A549 (cell line): ENCODE measurements at regions of chr19 and their contacts with region 1.

Region 1: DNA sequence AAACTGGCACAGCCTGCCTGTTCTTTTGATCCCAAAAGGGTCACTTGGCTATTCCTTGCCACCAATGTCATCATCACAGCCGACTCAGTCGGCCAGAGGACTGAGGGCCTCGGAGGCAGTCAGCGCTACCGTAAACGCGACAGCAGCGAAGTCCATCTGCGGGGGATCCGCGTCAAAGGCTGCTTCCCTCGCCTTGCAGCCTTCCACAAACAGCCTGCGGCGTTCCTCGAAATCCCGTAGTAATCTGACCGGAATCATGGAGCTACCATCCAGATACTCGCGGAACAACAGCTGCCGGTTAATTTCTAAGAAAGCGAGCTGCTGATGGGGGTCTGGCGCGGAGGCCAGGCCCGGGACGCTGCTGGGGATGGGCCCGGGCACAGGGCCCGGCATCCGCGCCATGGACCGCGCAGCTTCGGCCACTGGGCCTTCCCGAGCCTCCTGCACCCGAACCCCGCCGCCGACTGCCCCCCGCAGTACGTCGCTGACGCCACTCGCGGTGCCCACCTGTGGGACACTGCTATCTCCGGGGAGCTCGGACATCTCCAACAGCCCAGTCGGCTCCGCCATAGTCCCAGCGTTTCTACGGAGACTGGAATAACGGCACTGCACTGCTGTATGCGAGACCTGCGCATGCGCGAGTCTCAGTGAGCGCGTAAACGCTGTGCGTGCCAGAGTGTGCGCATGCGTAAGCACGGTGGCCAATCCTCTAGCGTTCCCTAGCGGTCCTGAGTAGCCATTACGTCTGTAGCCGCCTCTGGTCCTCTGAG is at the start of gene EID2B:
- DNase-seq: peak; percentile 99 to 100
- ATAC-seq: peak; percentile 95 to 96
- H3K4me3 ChIP-seq: peak within 1 kb of the TSS; percentile 68
- H3K27ac ChIP-seq: peak within 1 kb of the TSS; percentile 83 to 88
- H3K4me1 ChIP-seq: peaks cover 14% of the 10 kb centered on the region
- CTCF ChIP-seq: peak; percentile 100
- EP300 ChIP-seq: no peak
- POLR2A ChIP-seq: peak; percentile 96
- RAD21 ChIP-seq: peak; percentile 100
- polyA plus RNA-seq, gene EID2B: 9.4 and 10.9 TPM in 2 replicates

Region 2: DNA sequence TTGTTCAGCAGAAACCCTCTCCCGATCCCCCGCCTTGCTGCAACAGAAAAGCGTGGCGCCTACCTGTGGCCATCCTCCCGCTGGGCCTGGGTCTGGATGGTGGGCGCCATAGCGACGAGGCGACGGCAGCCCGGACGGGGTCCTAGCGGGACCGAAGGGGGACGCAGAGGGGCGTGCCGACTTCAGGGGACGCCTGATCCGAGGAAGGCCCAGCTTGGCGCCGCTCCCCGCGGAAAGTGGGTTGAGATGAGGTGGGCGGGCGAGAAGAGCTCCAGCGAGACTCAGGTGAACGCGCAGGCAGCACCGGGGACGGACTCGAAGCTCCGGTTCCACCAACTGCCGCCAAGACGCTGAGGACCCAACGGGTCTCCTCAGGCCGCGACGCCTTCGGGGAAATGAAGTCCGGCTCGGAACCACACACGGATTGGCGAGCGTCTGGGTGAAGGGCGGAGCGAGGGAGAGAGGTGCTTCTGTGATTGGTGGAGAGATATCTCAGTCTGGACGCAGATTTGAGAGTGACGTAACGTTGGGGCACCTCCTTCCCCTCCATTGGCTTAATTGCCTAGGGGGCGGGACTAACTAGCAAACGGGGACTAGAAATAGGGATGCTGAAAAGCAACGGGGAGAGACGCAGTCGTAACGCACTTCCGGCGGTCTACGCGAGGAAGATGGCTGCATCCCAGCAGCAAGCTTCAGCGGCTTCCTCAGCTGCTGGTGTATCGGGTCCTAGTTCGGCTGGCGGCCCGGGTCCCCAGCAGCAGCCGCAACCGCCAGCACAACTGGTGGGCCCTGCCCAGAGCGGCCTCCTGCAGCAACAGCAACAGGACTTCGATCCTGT is 141.4 kb before region 1 on chr19 and contains the starts of genes MED29 and PAF1:
- CTCF ChIA-PET with region 1: interaction called, 35 read pairs
- POLR2A ChIA-PET with region 1: no interaction called
- DNase-seq: peak; percentile 100
- ATAC-seq: peak; percentile 91 to 97
- H3K4me3 ChIP-seq: peak within 1 kb of the TSS; percentile 68
- H3K27ac ChIP-seq: peak within 1 kb of the TSS; percentile 89 to 90
- H3K4me1 ChIP-seq: peaks cover 15% of the 10 kb centered on the region; the same call in 2 of the 3 replicates
- CTCF ChIP-seq: no peak
- EP300 ChIP-seq: no peak
- POLR2A ChIP-seq: peak; percentile 99
- RAD21 ChIP-seq: no peak; a peak in 1 of 5 replicates
- polyA plus RNA-seq, gene MED29: 55.7 and 57.5 TPM in 2 replicates
- polyA plus RNA-seq, gene PAF1: 73.0 and 103 TPM in 2 replicates

Region 3: DNA sequence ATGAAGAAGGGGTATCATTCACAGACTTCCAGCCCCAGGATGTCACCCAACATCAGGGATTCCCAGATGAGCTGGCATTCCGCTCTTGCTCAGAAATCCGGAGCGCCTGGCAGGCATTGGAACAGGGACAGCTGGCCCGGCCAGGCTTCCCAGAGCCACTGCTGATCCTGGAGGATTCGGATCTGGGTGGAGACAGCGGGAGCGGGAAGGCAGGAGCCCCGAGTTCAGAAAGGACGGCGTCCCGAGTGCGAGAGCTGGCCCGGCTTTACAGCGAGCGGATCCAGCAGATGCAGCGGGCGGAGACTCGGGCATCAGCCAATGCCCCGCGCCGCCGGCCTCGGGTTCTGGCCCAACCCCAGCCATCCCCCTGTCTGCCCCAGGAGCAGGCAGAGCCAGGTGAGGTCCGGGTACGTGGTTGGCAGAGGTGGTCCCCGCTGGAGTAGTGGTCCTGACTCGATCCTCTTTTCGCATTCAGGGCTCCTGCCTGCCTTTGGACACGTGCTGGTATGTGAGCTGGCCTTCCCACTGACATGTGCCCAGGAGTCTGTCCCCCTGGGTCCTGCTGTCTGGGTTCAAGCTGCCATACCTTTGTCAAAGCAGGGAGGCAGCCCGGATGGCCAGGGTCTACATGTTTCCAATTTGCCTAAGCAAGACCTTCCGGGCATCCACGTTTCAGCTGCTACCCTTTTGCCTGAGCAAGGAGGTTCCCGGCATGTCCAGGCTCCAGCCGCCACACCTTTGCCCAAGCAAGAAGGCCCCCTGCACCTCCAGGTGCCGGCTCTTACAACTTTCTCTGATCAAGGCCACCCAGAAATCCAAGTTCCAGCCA is 108.9 kb before region 1 on chr19:
- CTCF ChIA-PET with region 1: interaction called, 50 read pairs
- POLR2A ChIA-PET with region 1: no interaction called
- DNase-seq: no peak
- ATAC-seq: 0 out of 6 replicates have a peak, but pooled peaks of 1 of the 2 experiments have one; percentile 1
- H3K4me3 ChIP-seq: no peak overlapping the region
- H3K27ac ChIP-seq: no peak overlapping the region
- H3K4me1 ChIP-seq: peaks cover 12% of the 10 kb centered on the region
- CTCF ChIP-seq: no peak
- EP300 ChIP-seq: no peak
- POLR2A ChIP-seq: no peak
- RAD21 ChIP-seq: no peak

Region 4: DNA sequence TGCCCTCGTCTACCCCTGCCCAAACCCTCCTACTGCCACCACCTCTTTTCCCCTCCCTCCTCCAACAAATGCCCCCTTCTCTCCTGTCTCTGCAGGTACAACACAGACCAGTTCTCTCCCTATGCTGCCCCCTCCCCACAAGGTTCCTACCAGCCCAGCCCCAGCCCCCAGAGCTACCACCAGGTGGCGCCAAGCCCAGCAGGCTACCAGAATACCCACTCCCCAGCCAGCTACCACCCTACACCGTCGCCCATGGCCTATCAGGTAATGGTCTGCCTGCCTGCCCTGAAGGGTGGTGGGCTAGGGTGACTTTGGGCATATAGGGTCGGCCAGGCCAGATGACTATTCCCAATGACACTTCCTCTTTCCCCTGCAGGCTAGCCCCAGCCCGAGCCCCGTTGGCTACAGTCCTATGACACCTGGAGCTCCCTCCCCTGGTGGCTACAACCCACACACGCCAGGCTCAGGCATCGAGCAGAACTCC is 58.2 kb before region 1 on chr19:
- CTCF ChIA-PET with region 1: interaction called, 299 read pairs
- POLR2A ChIA-PET with region 1: interaction called, 3 read pairs
- DNase-seq: peak; percentile 64 to 89
- ATAC-seq: peak; percentile 58 to 87; a peak in 5 of 6 replicates
- H3K4me3 ChIP-seq: no peak overlapping the region
- H3K27ac ChIP-seq: no peak overlapping the region
- H3K4me1 ChIP-seq: peaks cover 13% of the 10 kb centered on the region
- CTCF ChIP-seq: peak; percentile 97
- EP300 ChIP-seq: no peak
- POLR2A ChIP-seq: no peak
- RAD21 ChIP-seq: peak; percentile 61 to 69; a peak in 4 of 5 replicates

Region 5: GRCh38 chr19:39502640-39503417 is 29.6 kb before region 1 on chr19:
- CTCF ChIA-PET with region 1: interaction called, 259 read pairs
- POLR2A ChIA-PET with region 1: no interaction called
- DNase-seq: peak; percentile 94 to 97
- ATAC-seq: peak in 1 of 2 experiments; percentile 39; a peak in 4 of 6 replicates
- H3K4me3 ChIP-seq: peak overlapping the region; percentile 16; the same call in 1 of the 3 replicates
- H3K27ac ChIP-seq: peak overlapping the region; percentile 6 to 57; a peak in 2 of 6 replicates
- H3K4me1 ChIP-seq: peaks cover 25% of the 10 kb centered on the region
- CTCF ChIP-seq: peak; percentile 99
- EP300 ChIP-seq: no peak
- POLR2A ChIP-seq: no peak
- RAD21 ChIP-seq: peak in 1 of 2 experiments; percentile 58; a peak in 4 of 5 replicates

Region 6: DNA sequence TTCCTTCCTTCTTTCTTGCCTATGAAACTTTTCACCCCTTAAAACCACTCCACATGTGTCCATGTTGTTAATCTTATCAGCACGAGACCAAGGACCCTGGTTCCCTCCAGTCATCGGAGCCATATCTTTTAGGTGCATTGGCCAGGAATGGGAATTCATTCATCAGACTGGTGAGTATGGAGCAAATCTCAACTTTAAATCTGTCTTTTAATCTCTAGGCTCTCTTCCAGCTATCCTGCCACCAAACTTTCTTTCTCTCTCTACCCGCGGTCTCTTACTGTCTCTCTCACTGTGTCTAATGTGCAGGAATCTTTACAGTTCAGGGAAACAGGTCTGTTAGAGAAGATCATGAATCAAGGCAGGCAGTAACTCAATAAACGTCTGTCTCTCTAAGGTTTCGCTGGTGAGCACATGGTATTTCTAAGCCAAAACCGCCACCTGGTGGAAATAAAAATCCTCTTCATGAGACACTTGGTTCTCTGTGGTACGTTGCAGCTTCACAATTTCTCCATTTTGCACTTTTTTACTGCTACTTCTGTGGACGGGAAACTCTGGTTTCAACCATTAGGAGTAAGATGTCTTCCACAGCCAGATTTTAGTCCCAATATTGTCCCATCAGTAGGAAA is 139.4 kb after region 1 on chr19:
- CTCF ChIA-PET with region 1: interaction called, 30 read pairs
- POLR2A ChIA-PET with region 1: interaction called, 3 read pairs
- DNase-seq: peak; percentile 69 to 83
- ATAC-seq: peak; percentile 95 to 98
- H3K4me3 ChIP-seq: no peak overlapping the region
- H3K27ac ChIP-seq: no peak overlapping the region
- H3K4me1 ChIP-seq: peaks cover 5% of the 10 kb centered on the region; the same call in 1 of the 3 replicates
- CTCF ChIP-seq: peak; percentile 99
- EP300 ChIP-seq: no peak
- POLR2A ChIP-seq: no peak
- RAD21 ChIP-seq: peak; percentile 99 to 100

Region 7: GRCh38 chr19:39765091-39766076 is 233.0 kb after region 1 on chr19:
- CTCF ChIA-PET with region 1: no interaction called
- POLR2A ChIA-PET with region 1: no interaction called
- DNase-seq: peak; percentile 41 to 82
- ATAC-seq: peak; percentile 55 to 77; a peak in 3 of 6 replicates
- H3K4me3 ChIP-seq: no peak overlapping the region
- H3K27ac ChIP-seq: no peak overlapping the region
- H3K4me1 ChIP-seq: no peaks in the 10 kb centered on the region
- CTCF ChIP-seq: peak; percentile 94
- EP300 ChIP-seq: no peak
- POLR2A ChIP-seq: no peak
- RAD21 ChIP-seq: peak; percentile 39 to 63; a peak in 3 of 5 replicates